ENCODE measurements at regions of chr11 and their contacts with region 1.

Region 1: GRCh38 chr11:62081378-62082291 is 42.2 kb upstream of the INCENP start:
- DNase-seq: peak; percentile 75 to 81 (median 78)
- H3K4me3 ChIP-seq: no peak overlapping the region
- H3K4me3 Mint-ChIP-seq: peak overlapping the region in 6 of 8 donors; percentile 3 to 84 (median 50)
- H3K27ac ChIP-seq: no peak overlapping the region
- H3K27ac Mint-ChIP-seq: peak overlapping the region in 6 of 7 donors; percentile 1 to 92 (median 50)
- H3K4me1 ChIP-seq: peaks cover 9% of the 10 kb centered on the region
- H3K4me1 Mint-ChIP-seq: peaks cover 3 to 7% (median 6%) of the 10 kb centered on the region in 4 donors
- H3K27me3 ChIP-seq: no peaks in the 10 kb centered on the region
- H3K27me3 Mint-ChIP-seq: peaks cover 0 to 2% of the 10 kb centered on the region in 2 donors

Region 2: DNA sequence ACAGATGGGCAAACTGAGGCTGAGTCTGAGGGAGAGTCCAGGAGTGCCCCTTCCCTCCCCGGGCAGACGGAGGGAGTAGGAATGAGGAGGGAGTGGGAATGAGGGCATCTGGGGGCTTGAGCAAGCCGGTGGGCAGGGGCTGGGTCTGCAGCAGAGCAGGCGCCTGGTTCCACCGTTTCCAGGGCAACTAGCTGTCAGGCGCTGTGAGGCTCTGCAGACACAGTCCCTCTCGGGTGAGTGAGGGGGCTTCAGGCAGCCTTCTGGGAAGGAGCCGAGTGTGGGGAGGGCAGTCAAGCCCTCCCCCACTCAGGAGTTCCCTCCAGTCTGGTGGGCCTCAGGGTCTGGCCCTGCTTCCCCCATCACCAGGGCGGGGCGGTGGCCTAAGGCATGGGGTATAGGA is 308.3 kb before region 1 on chr11:
- CTCF ChIA-PET with region 1: no interaction called
- POLR2A ChIA-PET with region 1: no interaction called
- intact Hi-C with region 1: no loop called
- DNase-seq: no peak
- H3K4me3 ChIP-seq: no peak overlapping the region
- H3K4me3 Mint-ChIP-seq: no peak overlapping the region
- H3K27ac ChIP-seq: no peak overlapping the region
- H3K27ac Mint-ChIP-seq: peak overlapping the region in 1 of 7 donors; percentile 41
- H3K4me1 ChIP-seq: peaks cover 21% of the 10 kb centered on the region
- H3K4me1 Mint-ChIP-seq: peaks cover 8 to 37% (median 15%) of the 10 kb centered on the region in 4 donors
- H3K27me3 ChIP-seq: no peaks in the 10 kb centered on the region
- H3K27me3 Mint-ChIP-seq: no peaks in the 10 kb centered on the region

Region 3: GRCh38 chr11:61792310-61793085 is 289.1 kb before region 1 on chr11 and contains the starts of genes FEN1 and TMEM258:
- CTCF ChIA-PET with region 1: interaction called, 169 read pairs
- POLR2A ChIA-PET with region 1: interaction called, 11 read pairs
- intact Hi-C with region 1: loop called (anchors 1 kb)
- DNase-seq: peak; percentile 87 to 92 (median 91)
- H3K4me3 ChIP-seq: peak within 1 kb of the TSS; percentile 95 to 96
- H3K4me3 Mint-ChIP-seq: peak within 1 kb of the TSS; percentile 89 to 99 (median 94)
- H3K27ac ChIP-seq: peak within 1 kb of the TSS; percentile 98
- H3K27ac Mint-ChIP-seq: peak within 1 kb of the TSS; percentile 93 to 100 (median 99)
- H3K4me1 ChIP-seq: peaks cover 21% of the 10 kb centered on the region
- H3K4me1 Mint-ChIP-seq: peaks cover 12 to 56% (median 31%) of the 10 kb centered on the region in 4 donors
- H3K27me3 ChIP-seq: no peaks in the 10 kb centered on the region
- H3K27me3 Mint-ChIP-seq: no peaks in the 10 kb centered on the region
- total RNA-seq, gene FEN1: 7.4 to 8.0 TPM
- total RNA-seq, gene TMEM258: 113 to 117 TPM

Region 4: GRCh38 chr11:61871158-61871597 is 210.5 kb before region 1 on chr11:
- CTCF ChIA-PET with region 1: interaction called, 36 read pairs
- POLR2A ChIA-PET with region 1: interaction called, 4 read pairs
- intact Hi-C with region 1: loop called (anchors 1 kb)
- DNase-seq: peak; percentile 48 to 64 (median 55)
- H3K4me3 ChIP-seq: no peak overlapping the region
- H3K4me3 Mint-ChIP-seq: peak overlapping the region in 6 of 8 donors; percentile 62 to 80 (median 68)
- H3K27ac ChIP-seq: no peak overlapping the region
- H3K27ac Mint-ChIP-seq: peak overlapping the region in 1 of 7 donors; percentile 72
- H3K4me1 ChIP-seq: peaks cover 4% of the 10 kb centered on the region
- H3K4me1 Mint-ChIP-seq: peaks cover 4 to 7% (median 5%) of the 10 kb centered on the region in 4 donors
- H3K27me3 ChIP-seq: no peaks in the 10 kb centered on the region
- H3K27me3 Mint-ChIP-seq: peaks cover 2 to 6% of the 10 kb centered on the region in 2 donors

Region 5: GRCh38 chr11:61908730-61909315 is 172.8 kb before region 1 on chr11:
- CTCF ChIA-PET with region 1: interaction called, 387 read pairs
- POLR2A ChIA-PET with region 1: no interaction called
- intact Hi-C with region 1: no loop called
- DNase-seq: no peak
- H3K4me3 ChIP-seq: no peak overlapping the region
- H3K4me3 Mint-ChIP-seq: no peak overlapping the region
- H3K27ac ChIP-seq: no peak overlapping the region
- H3K27ac Mint-ChIP-seq: peak overlapping the region in 1 of 7 donors; percentile 61
- H3K4me1 ChIP-seq: no peaks in the 10 kb centered on the region
- H3K4me1 Mint-ChIP-seq: no peaks in the 10 kb centered on the region
- H3K27me3 ChIP-seq: no peaks in the 10 kb centered on the region
- H3K27me3 Mint-ChIP-seq: peaks cover 0 to 9% of the 10 kb centered on the region in 2 donors

Region 6: DNA sequence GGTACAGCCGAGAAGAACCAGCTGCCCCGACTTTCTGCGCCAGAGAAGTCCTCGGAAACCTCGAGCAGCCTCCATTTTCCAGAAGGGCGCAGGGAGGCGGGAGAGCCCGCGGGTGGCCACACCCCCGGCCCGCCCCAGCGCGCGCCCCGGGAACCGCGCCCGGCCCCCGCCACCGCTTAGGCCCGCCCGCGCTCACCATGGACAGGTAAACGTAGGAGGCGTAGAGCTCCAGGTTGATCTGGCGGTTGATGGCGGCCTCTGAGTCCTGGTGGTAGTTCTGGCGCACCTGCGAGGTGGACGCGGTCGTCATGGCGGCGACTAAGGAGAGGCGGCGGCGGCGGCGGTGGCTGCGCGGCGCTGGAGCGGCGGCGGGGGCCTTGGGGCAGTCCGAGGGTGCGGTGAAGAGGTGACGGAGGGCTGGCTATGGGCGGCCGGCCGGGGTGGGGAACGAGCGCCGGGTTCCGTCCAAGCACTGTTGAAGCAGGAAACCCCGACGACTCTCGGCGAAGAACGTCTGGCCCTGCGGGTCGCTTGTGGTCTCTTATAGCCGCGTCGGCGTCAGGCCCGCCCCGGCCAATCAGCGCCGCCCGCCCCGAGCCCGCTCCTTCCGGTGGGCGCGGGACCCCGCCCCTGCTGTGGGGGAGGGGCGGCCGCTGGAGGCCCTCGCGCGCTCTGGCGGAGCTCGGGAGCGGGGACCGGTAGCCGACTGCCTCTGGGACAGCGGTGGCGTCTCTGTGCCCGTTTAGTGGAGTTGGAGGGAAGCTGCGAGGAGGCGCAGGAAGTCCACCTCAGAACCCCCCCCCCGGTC is 114.3 kb before region 1 on chr11 and contains the start of gene FTH1:
- CTCF ChIA-PET with region 1: interaction called, 90 read pairs
- POLR2A ChIA-PET with region 1: interaction called, 58 read pairs
- intact Hi-C with region 1: no loop called
- DNase-seq: peak; percentile 91 to 95 (median 92)
- H3K4me3 ChIP-seq: peak within 1 kb of the TSS; percentile 99 to 100
- H3K4me3 Mint-ChIP-seq: peak within 1 kb of the TSS; percentile 92 to 97 (median 95)
- H3K27ac ChIP-seq: peak within 1 kb of the TSS; percentile 89
- H3K27ac Mint-ChIP-seq: peak within 1 kb of the TSS; percentile 90 to 99 (median 98)
- H3K4me1 ChIP-seq: peaks cover 38% of the 10 kb centered on the region
- H3K4me1 Mint-ChIP-seq: peaks cover 36 to 74% (median 50%) of the 10 kb centered on the region in 4 donors
- H3K27me3 ChIP-seq: no peaks in the 10 kb centered on the region
- H3K27me3 Mint-ChIP-seq: no peaks in the 10 kb centered on the region
- total RNA-seq, gene FTH1: 695 to 763 TPM

Region 7: GRCh38 chr11:62054484-62055121 is 27.0 kb before region 1 on chr11:
- CTCF ChIA-PET with region 1: interaction called, 28 read pairs
- POLR2A ChIA-PET with region 1: no interaction called
- intact Hi-C with region 1: no loop called
- DNase-seq: peak; percentile 11 to 53 (median 36)
- H3K4me3 ChIP-seq: no peak overlapping the region
- H3K4me3 Mint-ChIP-seq: no peak overlapping the region
- H3K27ac ChIP-seq: no peak overlapping the region
- H3K27ac Mint-ChIP-seq: peak overlapping the region in 1 of 7 donors; percentile 29
- H3K4me1 ChIP-seq: no peaks in the 10 kb centered on the region
- H3K4me1 Mint-ChIP-seq: no peaks in the 10 kb centered on the region
- H3K27me3 ChIP-seq: no peaks in the 10 kb centered on the region
- H3K27me3 Mint-ChIP-seq: peaks cover 0 to 3% of the 10 kb centered on the region in 2 donors

Region 8: GRCh38 chr11:62108017-62108750 is 26.5 kb after region 1 on chr11:
- CTCF ChIA-PET with region 1: interaction called, 75 read pairs
- POLR2A ChIA-PET with region 1: interaction called, 6 read pairs
- intact Hi-C with region 1: no loop called
- DNase-seq: peak; percentile 55 to 71 (median 66)
- H3K4me3 ChIP-seq: no peak overlapping the region
- H3K4me3 Mint-ChIP-seq: peak overlapping the region in 2 of 8 donors; percentile 36 to 39
- H3K27ac ChIP-seq: no peak overlapping the region
- H3K27ac Mint-ChIP-seq: peak overlapping the region in 2 of 7 donors; percentile 60 to 68
- H3K4me1 ChIP-seq: peaks cover 13% of the 10 kb centered on the region
- H3K4me1 Mint-ChIP-seq: peaks cover 9 to 19% (median 13%) of the 10 kb centered on the region in 4 donors
- H3K27me3 ChIP-seq: no peaks in the 10 kb centered on the region
- H3K27me3 Mint-ChIP-seq: no peaks in the 10 kb centered on the region